AG04449 (cell line): ENCODE measurements at regions of chr18 and their contacts with region 1.

Region 1: GRCh38 chr18:70195852-70196434 is 9.5 kb downstream of the RTTN start:
- DNase-seq: no peak
- H3K4me3 ChIP-seq: no peak overlapping the region
- CTCF ChIP-seq: peak; percentile 63

Region 2: DNA sequence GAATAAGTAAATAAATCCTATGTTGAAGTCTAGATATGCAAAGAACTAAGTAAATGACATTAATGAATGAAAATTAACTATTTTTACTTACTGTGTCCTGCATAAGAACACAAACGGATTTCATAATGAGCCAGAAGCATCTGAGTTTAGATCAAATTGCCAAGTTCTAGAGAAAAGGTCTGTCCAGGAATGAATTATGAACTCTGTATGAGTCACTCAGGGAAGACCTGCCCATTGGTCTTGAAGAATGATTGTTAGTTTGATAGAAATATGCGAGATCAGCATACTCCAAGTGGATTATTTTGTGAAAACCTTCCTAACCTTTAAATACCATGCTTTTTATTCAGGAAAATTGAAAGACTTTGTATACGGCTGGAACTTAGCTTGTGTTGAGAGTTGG is 605.8 kb before region 1 on chr18:
- CTCF ChIA-PET with region 1: no interaction called
- POLR2A ChIA-PET with region 1: no interaction called
- DNase-seq: no peak
- H3K4me3 ChIP-seq: no peak overlapping the region
- CTCF ChIP-seq: no peak

Region 3: GRCh38 chr18:70165936-70166335 is 30.0 kb before region 1 on chr18:
- CTCF ChIA-PET with region 1: interaction called, 47 read pairs
- POLR2A ChIA-PET with region 1: no interaction called
- DNase-seq: no peak
- H3K4me3 ChIP-seq: no peak overlapping the region
- CTCF ChIP-seq: no peak

Region 4: DNA sequence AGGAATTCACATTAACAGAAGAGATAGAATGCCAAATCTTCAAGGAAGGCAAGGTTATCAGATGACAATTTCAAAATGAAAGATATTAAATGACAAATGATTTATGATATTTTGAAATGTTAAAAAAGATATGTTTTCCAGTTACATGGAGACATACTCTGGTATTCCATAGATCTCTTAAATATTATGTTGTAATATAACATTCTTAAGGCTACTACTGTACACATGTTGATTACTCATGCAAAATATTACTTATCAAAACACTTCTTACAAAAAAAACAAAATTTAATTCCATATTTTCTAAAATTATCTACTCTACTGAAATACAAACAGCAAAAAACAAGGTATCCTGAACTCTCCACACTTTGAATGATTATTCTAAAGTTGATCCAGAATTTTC is 13.4 kb before region 1 on chr18:
- CTCF ChIA-PET with region 1: interaction called, 64 read pairs
- POLR2A ChIA-PET with region 1: no interaction called
- DNase-seq: no peak
- H3K4me3 ChIP-seq: no peak overlapping the region
- CTCF ChIP-seq: no peak

Region 5: DNA sequence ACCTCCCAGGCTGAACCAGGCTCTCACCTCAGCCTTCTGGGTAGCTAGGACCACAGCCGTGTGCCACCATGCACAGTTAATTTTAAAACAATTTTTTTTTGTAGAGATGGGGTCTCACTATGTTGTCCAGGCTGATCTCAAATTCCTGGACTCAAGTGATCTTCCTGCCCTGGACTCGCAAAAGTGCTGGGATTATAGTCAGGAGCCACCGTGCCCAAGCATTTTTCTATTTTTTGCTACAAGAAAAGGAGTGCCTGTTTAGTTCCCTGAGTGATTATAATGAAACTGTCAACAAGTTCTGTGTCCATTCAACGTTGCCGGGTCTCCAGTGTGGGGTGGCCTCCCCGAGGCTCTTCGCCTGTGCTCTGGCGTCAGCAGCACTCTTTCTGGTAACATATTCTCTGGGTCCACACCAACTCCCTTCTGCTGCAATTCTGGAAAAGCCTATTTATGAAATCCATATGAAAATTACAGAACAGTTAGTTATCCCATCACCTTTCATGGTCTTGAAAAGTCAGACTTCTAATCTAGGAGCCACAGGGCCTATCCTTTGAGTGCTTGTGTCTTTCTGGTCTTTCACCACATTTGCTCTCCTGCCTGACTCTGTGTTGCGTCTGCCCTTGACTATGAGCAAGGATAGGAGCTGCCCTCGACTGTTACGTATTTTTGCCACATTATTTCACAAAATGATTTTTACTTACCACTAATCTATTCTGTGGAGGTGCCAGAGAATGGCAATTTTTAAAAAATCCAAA is 265.6 kb after region 1 on chr18:
- CTCF ChIA-PET with region 1: interaction called, 432 read pairs
- POLR2A ChIA-PET with region 1: no interaction called
- DNase-seq: no peak
- H3K4me3 ChIP-seq: no peak overlapping the region
- CTCF ChIP-seq: no peak